ENCODE measurements at regions of chr1 and their contacts with region 1.

Region 1: GRCh38 chr1:193960499-193960898 is 774.1 kb upstream of the B3GALT2 start:
- DNase-seq: no peak
- ATAC-seq: peak; percentile 84

Region 2: GRCh38 chr1:194069168-194069830 is 108.8 kb after region 1 on chr1:
- intact Hi-C with region 1: loop called (anchors 5 kb)
- DNase-seq: peak; percentile 85
- ATAC-seq: peak; percentile 93

Measured in Right ventricle myocardium superior (tissue), 1 donor.